Naive thymus-derived CD4-positive, alpha-beta T cell (primary cell): ENCODE measurements at regions of chr15 and their contacts with region 1.

Region 1: DNA sequence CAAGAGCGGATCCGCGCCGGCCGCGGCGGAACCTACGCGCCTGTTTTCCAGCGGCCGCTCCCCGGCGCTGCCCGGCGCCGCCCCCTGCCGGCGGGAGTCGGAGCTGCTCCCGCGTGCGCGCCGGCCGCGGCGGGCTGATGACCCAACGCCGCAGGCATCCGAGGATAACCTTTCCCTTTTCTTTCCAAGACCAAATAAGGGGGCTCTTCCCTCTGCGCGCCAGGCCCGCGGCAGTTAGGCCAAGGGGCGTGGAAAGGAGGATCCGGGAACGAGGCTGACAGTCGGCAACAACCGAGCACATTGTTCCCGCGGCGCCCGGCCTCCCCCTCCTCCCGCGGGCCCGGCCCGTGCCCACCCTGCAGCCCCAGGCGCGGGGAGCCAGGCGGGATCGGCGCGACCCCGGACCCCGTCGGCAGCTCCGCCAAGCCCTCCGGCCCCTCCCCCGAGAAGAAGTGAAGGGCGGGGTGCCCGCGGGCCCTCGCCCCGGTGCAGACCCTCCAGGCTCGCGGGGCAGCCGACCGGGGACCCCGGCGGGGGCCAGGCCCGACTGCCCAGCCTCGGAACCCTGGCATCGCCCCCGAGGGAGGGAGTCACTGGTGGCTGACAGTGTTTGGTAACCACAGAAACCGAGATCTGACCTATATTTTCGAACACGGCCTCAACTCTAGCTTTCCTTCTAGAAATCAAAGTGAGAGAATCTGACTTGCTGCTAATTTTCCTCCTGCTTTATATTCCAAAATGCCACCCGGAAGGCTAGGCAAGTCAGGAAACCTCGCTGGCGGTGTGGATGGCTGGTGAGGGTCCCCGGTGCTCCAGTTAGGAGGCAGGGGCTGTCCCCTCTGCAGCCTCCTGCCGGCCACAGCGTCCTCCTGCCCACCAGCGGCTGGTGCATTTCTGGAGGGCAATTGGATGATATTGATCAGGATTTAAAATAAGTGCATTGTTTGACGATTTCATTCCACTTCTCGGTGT is 45.6 kb upstream of the SYNM start:
- DNase-seq: peak in 8 of 9 donors; percentile 14 to 75 (median 50)
- ATAC-seq: peak; percentile 85
- H3K4me3 ChIP-seq: peak overlapping the region; percentile 50
- H3K4me3 Mint-ChIP-seq: peak overlapping the region; percentile 66 to 83 (median 70)
- H3K27ac ChIP-seq: no peak overlapping the region
- H3K27ac Mint-ChIP-seq: no peak overlapping the region
- H3K4me1 ChIP-seq: peaks cover 0 to 3% of the 10 kb centered on the region in 2 donors
- H3K4me1 Mint-ChIP-seq: peaks cover 0 to 14% (median 8%) of the 10 kb centered on the region in 7 donors
- H3K27me3 ChIP-seq: peaks cover 0 to 18% of the 10 kb centered on the region in 2 donors
- H3K27me3 Mint-ChIP-seq: peaks cover 29 to 59% (median 37%) of the 10 kb centered on the region in 5 donors

Region 2: GRCh38 chr15:97386940-97387339 is 1672.4 kb before region 1 on chr15:
- CTCF ChIA-PET with region 1: no interaction called
- POLR2A ChIA-PET with region 1: no interaction called
- intact Hi-C with region 1: no loop called
- DNase-seq: no peak
- ATAC-seq: no peak
- H3K4me3 ChIP-seq: no peak overlapping the region
- H3K4me3 Mint-ChIP-seq: no peak overlapping the region
- H3K27ac ChIP-seq: no peak overlapping the region
- H3K27ac Mint-ChIP-seq: no peak overlapping the region
- H3K4me1 ChIP-seq: no peaks in the 10 kb centered on the region
- H3K4me1 Mint-ChIP-seq: no peaks in the 10 kb centered on the region
- H3K27me3 ChIP-seq: no peaks in the 10 kb centered on the region
- H3K27me3 Mint-ChIP-seq: peaks cover 0 to 9% (median 0%) of the 10 kb centered on the region in 5 donors

Region 3: DNA sequence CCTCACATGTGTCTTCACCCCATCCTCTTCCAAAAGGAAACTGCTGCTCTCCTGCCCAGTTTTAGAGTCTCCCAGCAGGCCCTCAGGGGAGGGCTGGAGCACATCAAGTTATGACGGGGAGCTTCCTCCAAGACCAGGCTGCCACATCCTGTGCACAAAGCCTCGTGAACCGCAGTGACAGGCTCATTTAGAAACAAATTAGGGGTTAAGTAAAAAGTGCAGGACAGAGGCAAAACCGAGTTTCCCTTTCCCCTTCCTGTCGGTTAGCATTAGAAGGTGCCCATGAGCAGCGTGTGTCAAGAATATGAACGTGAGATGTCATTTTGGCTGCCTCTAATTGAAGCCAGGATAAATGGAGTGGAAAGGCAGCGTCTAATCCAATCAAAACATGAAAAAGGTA is 899.1 kb before region 1 on chr15:
- CTCF ChIA-PET with region 1: no interaction called
- POLR2A ChIA-PET with region 1: no interaction called
- intact Hi-C with region 1: no loop called
- DNase-seq: peak in 7 of 9 donors; percentile 25 to 62 (median 48)
- ATAC-seq: peak; percentile 89
- H3K4me3 ChIP-seq: no peak overlapping the region
- H3K4me3 Mint-ChIP-seq: peak overlapping the region; percentile 31 to 71 (median 54)
- H3K27ac ChIP-seq: no peak overlapping the region
- H3K27ac Mint-ChIP-seq: peak overlapping the region in 5 of 9 donors; percentile 14 to 82 (median 69)
- H3K4me1 ChIP-seq: peaks cover 0 to 18% of the 10 kb centered on the region in 2 donors
- H3K4me1 Mint-ChIP-seq: peaks cover 17 to 40% (median 26%) of the 10 kb centered on the region in 7 donors
- H3K27me3 ChIP-seq: no peaks in the 10 kb centered on the region
- H3K27me3 Mint-ChIP-seq: peaks cover 0 to 31% (median 2%) of the 10 kb centered on the region in 5 donors

Region 4: DNA sequence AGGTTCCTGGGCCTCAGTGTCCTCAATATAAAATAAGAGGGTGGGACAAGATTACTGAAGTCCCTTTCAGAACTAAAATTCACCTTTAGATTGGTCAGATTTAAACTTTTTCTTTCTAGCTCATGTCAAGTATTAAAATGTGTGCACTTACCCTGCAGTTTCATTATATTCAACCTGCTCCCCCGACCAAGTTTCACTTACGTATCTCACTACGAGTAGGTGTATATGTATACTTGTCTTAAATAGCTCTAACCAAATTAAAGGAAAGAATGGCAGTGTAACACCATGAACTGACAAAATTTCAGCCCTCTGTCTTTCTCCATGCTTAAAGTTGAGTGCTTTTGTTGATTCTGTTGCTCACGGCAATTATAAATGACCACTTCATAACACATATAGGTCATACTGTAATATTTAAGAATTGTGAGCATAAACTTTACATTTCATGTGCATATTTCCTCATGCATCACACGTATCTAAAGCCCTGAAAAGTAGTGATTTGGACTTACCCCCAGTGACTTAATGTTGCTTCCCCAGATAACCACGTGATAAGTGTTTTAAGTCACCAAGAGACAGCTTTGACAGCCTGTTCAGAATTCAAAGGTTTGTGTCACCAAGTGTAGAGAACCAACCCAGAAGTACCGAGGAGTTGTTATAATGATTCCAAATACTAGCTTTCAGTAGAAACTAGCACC is 121.7 kb before region 1 on chr15:
- CTCF ChIA-PET with region 1: no interaction called
- POLR2A ChIA-PET with region 1: no interaction called
- intact Hi-C with region 1: loop called in 1 of 2 experiments (anchors 10 kb)
- DNase-seq: no peak
- ATAC-seq: no peak
- H3K4me3 ChIP-seq: no peak overlapping the region
- H3K4me3 Mint-ChIP-seq: no peak overlapping the region
- H3K27ac ChIP-seq: no peak overlapping the region
- H3K27ac Mint-ChIP-seq: peak overlapping the region in 2 of 9 donors; percentile 2 to 38
- H3K4me1 ChIP-seq: no peaks in the 10 kb centered on the region
- H3K4me1 Mint-ChIP-seq: peaks cover 0 to 7% (median 0%) of the 10 kb centered on the region in 7 donors
- H3K27me3 ChIP-seq: no peaks in the 10 kb centered on the region
- H3K27me3 Mint-ChIP-seq: no peaks in the 10 kb centered on the region

Region 5: GRCh38 chr15:99014803-99015676 is 44.3 kb before region 1 on chr15:
- CTCF ChIA-PET with region 1: no interaction called
- POLR2A ChIA-PET with region 1: no interaction called
- intact Hi-C with region 1: loop called in 1 of 2 experiments (anchors 5 kb)
- DNase-seq: peak in 7 of 9 donors; percentile 14 to 69 (median 33)
- ATAC-seq: peak; percentile 83
- H3K4me3 ChIP-seq: peak overlapping the region; percentile 27
- H3K4me3 Mint-ChIP-seq: peak overlapping the region; percentile 58 to 74 (median 71)
- H3K27ac ChIP-seq: no peak overlapping the region
- H3K27ac Mint-ChIP-seq: peak overlapping the region in 1 of 9 donors; percentile 62
- H3K4me1 ChIP-seq: no peaks in the 10 kb centered on the region
- H3K4me1 Mint-ChIP-seq: peaks cover 0 to 15% (median 9%) of the 10 kb centered on the region in 7 donors
- H3K27me3 ChIP-seq: no peaks in the 10 kb centered on the region
- H3K27me3 Mint-ChIP-seq: peaks cover 16 to 46% (median 23%) of the 10 kb centered on the region in 5 donors

Region 6: GRCh38 chr15:99100245-99101173 is 41.2 kb after region 1 on chr15:
- CTCF ChIA-PET with region 1: no interaction called
- POLR2A ChIA-PET with region 1: no interaction called
- intact Hi-C with region 1: no loop called
- DNase-seq: peak in 4 of 9 donors; percentile 7 to 63 (median 18)
- ATAC-seq: peak; percentile 42
- H3K4me3 ChIP-seq: no peak overlapping the region
- H3K4me3 Mint-ChIP-seq: peak overlapping the region in 4 of 10 donors; percentile 7 to 39 (median 28)
- H3K27ac ChIP-seq: no peak overlapping the region
- H3K27ac Mint-ChIP-seq: no peak overlapping the region
- H3K4me1 ChIP-seq: no peaks in the 10 kb centered on the region
- H3K4me1 Mint-ChIP-seq: peaks cover 0 to 8% (median 0%) of the 10 kb centered on the region in 7 donors
- H3K27me3 ChIP-seq: no peaks in the 10 kb centered on the region
- H3K27me3 Mint-ChIP-seq: peaks cover 36 to 72% (median 46%) of the 10 kb centered on the region in 5 donors

Region 7: GRCh38 chr15:99123706-99124451 is 64.6 kb after region 1 on chr15:
- CTCF ChIA-PET with region 1: no interaction called
- POLR2A ChIA-PET with region 1: no interaction called
- intact Hi-C with region 1: no loop called
- DNase-seq: no peak
- ATAC-seq: peak; percentile 50
- H3K4me3 ChIP-seq: no peak overlapping the region
- H3K4me3 Mint-ChIP-seq: no peak overlapping the region
- H3K27ac ChIP-seq: no peak overlapping the region
- H3K27ac Mint-ChIP-seq: no peak overlapping the region
- H3K4me1 ChIP-seq: no peaks in the 10 kb centered on the region
- H3K4me1 Mint-ChIP-seq: peaks cover 0 to 2% (median 0%) of the 10 kb centered on the region in 7 donors
- H3K27me3 ChIP-seq: no peaks in the 10 kb centered on the region
- H3K27me3 Mint-ChIP-seq: peaks cover 0 to 16% (median 0%) of the 10 kb centered on the region in 5 donors